ENCODE measurements at regions of chr18 and their contacts with region 1.

Region 1: DNA sequence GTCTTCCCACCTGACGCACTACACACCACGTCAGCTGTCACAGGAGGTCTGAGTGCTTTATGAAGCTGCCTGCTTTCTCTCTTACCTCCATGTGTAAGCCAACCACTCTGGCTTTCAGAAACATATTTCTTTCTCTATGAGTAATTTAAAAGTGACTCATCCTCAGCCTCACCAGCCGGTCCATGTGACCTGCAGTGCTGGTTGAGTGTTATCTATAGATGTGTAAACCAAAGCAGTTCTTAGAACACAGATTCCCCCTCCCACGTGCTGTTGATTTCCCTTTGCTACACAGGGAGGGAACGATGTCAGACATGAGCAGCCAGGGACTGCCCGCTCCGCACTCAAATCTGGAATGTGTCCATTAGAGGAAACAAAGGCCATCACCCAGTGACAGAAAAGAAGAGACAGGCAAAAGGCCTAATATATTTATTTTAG is 157.8 kb downstream of the BCL2 start:
- DNase-seq: peak; percentile 94
- H3K4me3 Mint-ChIP-seq: peak overlapping the region; percentile 74
- H3K27ac Mint-ChIP-seq: peak overlapping the region; percentile 99
- H3K4me1 Mint-ChIP-seq: peaks cover 93% of the 10 kb centered on the region
- H3K27me3 Mint-ChIP-seq: no peaks in the 10 kb centered on the region

Region 2: DNA sequence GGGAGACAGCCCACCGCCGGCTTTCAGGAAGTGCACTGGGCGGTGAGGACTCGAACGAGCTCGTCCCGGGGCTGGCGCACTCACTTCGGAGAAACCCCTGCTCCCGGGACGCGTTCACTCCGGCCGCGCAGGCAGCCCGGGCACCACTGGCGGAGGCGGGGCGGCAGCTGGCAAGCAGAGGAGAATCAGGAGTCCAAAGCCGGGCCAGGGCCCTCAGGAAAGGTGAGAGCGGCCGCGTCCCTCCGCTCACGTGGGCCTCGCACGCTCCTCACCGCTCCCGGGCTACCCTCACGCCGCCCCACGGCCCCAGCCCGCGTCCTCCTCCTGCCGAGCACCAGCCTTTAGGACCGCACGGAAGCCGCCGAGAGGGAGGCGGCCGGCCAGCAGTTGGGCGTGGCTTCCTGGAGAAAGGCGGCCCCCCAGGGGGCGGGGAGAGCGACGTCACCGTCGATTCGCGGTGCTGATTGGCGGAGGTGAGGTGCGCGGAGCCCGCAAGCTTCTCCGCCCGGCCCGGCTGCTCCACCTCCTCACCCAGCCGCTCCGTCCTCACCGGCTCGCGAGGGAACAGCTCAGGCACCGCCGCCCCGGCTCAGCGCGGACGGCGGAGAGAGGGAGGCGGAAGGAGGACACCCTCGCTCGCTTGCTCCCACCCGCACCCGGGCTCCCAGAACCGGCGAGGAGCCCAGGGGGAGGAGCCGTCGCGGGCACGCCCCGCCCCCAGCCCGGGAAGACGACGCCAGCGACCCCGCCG is 639.1 kb before region 1 on chr18 and contains the start of gene ZCCHC2:
- CTCF ChIA-PET with region 1: no interaction called
- intact Hi-C with region 1: loop called (anchors 2 kb)
- DNase-seq: peak; percentile 98
- H3K4me3 Mint-ChIP-seq: peak within 1 kb of the TSS; percentile 92
- H3K27ac Mint-ChIP-seq: peak within 1 kb of the TSS; percentile 98
- H3K4me1 Mint-ChIP-seq: peaks cover 14% of the 10 kb centered on the region
- H3K27me3 Mint-ChIP-seq: no peaks in the 10 kb centered on the region
- total RNA-seq, gene ZCCHC2: 22.1 to 23.3 TPM

Region 3: DNA sequence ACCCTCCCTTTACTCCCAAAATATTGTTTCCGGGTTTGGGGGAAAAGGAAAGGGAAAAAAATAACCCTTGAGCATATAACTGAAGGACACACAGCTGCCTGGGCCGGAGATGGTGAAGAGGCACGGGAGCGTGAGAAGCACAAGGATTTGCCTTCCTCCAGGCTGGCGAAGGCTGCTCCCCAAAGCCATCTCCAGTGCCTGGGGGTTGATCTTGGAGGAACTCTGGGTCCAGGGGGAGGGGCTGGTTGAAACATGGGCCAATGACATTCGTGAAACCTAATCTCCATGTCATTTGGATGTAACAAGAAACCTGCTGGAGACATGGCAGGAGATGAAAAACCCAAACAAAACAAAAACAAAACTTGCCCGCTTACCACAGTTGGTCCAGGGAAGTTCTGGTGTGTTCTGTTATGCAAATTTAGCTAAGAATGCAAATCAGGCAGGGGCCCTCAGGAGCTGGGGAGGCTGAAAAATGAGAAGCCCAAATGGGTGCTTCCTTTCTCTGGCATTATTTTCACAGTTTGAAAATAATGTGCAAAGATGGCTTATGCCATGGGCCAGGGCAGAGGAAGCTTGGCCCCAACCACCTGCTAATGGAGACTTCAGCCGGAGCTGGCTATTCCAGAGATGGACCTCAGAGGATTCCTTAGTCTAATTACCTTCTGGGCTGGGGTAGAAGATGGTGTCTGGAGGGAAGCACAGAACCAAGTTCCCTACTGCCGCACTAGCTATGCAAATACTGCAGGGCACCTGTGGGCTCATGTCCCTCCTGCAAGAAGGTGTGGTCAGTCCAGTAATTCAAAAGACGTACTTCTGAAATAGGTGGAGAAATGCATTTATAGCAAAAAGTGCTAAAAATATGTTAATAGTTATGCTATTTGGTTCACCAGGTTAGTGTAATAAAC is 23.1 kb before region 1 on chr18:
- CTCF ChIA-PET with region 1: interaction called, 7 read pairs
- intact Hi-C with region 1: loop called (anchors 1 kb)
- DNase-seq: peak; percentile 65
- H3K4me3 Mint-ChIP-seq: peak overlapping the region; percentile 75
- H3K27ac Mint-ChIP-seq: peak overlapping the region; percentile 82
- H3K4me1 Mint-ChIP-seq: peaks cover 65% of the 10 kb centered on the region
- H3K27me3 Mint-ChIP-seq: no peaks in the 10 kb centered on the region

Region 4: GRCh38 chr18:63186520-63187222 is 24.9 kb after region 1 on chr18:
- CTCF ChIA-PET with region 1: interaction called, 3 read pairs
- intact Hi-C with region 1: loop called (anchors 1 kb)
- DNase-seq: no peak
- H3K4me3 Mint-ChIP-seq: no peak overlapping the region
- H3K27ac Mint-ChIP-seq: peak overlapping the region; percentile 41
- H3K4me1 Mint-ChIP-seq: peaks cover 78% of the 10 kb centered on the region
- H3K27me3 Mint-ChIP-seq: no peaks in the 10 kb centered on the region

Region 5: GRCh38 chr18:63224630-63225029 is 62.9 kb after region 1 on chr18:
- CTCF ChIA-PET with region 1: interaction called, 3 read pairs
- intact Hi-C with region 1: loop called (anchors 1 kb)
- DNase-seq: peak; percentile 81
- H3K4me3 Mint-ChIP-seq: peak overlapping the region; percentile 45
- H3K27ac Mint-ChIP-seq: peak overlapping the region; percentile 85
- H3K4me1 Mint-ChIP-seq: peaks cover 80% of the 10 kb centered on the region
- H3K27me3 Mint-ChIP-seq: no peaks in the 10 kb centered on the region

Region 6: DNA sequence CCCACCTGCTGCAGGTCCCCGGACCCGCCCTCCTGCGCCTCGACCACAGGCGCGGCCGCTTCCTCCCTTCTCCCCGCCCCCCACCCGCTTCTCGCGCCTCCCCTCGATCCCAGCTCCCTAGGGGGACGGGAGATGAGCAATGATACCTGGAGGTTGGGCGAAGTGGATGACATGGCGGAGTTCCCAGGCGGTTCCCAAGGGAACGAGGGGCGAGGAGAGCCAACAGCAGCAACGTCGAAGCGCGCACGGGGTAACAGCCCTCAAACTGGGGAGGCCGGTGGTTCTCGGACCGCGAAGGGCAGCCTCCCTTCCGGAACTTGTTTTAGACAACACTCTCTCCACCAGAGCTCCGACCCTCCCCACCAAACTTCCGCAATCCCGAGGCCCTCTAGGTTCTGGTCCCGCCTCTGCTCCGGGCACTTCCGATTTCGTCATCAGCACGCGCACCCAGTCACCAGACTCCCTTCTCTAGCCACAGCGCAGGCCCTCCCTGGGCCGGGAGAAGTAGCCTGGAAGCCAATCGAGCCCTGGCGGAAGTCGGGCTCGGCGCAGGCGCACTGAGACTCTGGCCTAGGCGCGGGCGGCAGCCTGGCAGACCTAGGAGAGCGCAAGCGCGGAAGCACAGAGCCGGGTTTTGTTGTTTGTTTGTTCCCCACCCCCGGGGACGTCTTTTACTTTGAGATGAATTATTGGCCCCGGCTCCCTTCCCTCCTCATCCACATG is 260.5 kb after region 1 on chr18 and contains the start of gene VPS4B:
- CTCF ChIA-PET with region 1: no interaction called
- intact Hi-C with region 1: loop called (anchors 1 kb)
- DNase-seq: peak; percentile 100
- H3K4me3 Mint-ChIP-seq: peak within 1 kb of the TSS; percentile 83
- H3K27ac Mint-ChIP-seq: peak within 1 kb of the TSS; percentile 95
- H3K4me1 Mint-ChIP-seq: peaks cover 28% of the 10 kb centered on the region
- H3K27me3 Mint-ChIP-seq: no peaks in the 10 kb centered on the region
- total RNA-seq, gene VPS4B: 28.7 to 30.1 TPM